ENCODE measurements at regions of chr2 and their contacts with region 1.

Region 1: GRCh38 chr2:104897515-104898184 is 43.7 kb downstream of the POU3F3 start:
- DNase-seq: no peak
- H3K4me3 Mint-ChIP-seq: no peak overlapping the region
- H3K27ac Mint-ChIP-seq: no peak overlapping the region
- H3K4me1 Mint-ChIP-seq: no peaks in the 10 kb centered on the region
- H3K27me3 Mint-ChIP-seq: peaks cover 10% of the 10 kb centered on the region

Region 2: GRCh38 chr2:104976603-104977120 is 79.0 kb after region 1 on chr2:
- CTCF ChIA-PET with region 1: no interaction called
- intact Hi-C with region 1: loop called (anchors 5 kb)
- DNase-seq: peak; percentile 59
- H3K4me3 Mint-ChIP-seq: peak overlapping the region; percentile 49
- H3K27ac Mint-ChIP-seq: no peak overlapping the region
- H3K4me1 Mint-ChIP-seq: peaks cover 11% of the 10 kb centered on the region
- H3K27me3 Mint-ChIP-seq: no peaks in the 10 kb centered on the region